Calu3 (cell line): ENCODE measurements at regions of chr2 and their contacts with region 1.

Region 1: DNA sequence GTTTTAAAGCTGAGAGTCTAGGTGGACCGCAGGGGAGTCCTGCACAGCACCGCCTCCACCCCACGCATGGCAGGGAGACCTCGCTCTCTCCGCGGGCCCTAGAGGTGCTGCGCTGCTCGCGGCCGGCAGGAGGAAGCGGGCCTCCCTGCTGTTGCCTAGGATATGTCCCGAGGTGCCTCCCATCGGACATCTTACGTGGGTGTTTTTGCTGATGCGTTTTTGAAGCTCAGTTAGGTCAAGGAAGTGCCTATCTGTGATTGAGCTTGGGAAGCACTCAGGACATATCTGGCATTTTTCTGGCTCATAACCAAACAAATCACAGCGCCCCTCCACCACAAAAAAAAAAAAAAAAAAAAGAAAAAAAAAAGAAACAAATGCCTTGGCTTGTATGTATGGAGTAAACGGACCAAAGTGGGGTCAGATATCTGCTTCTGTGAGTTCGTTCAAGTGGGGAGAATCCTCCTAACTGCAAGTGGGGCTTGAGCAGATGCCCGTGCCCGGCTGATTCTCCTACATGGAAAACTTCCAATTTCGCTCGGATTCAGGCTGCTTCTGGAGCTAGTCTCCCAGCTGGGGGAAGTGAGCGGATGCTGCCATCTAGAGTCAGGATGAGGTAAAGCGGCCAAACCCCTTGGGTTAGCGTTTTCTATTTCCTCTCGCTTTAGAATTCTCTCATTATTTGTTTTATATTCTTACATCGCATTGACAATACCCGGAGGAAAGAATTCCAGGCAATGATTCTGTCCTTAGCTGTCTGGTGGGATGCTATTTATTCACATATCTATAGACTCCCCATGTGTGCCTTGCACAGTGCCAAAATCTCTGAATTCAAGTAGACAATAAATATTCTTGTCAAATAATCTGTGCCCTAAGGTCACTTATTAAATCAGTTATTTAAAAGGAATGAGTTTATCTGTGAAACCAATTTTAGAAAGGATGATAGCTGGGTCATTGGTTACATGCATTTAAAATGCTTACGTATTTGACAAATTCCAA is 95.3 kb downstream of the CD8B2 start:
- DNase-seq: peak; percentile 74
- H3K4me3 Mint-ChIP-seq: peak overlapping the region; percentile 43
- H3K27ac Mint-ChIP-seq: no peak overlapping the region
- H3K4me1 Mint-ChIP-seq: peaks cover 9% of the 10 kb centered on the region
- H3K27me3 Mint-ChIP-seq: peaks cover 48% of the 10 kb centered on the region
- CTCF ChIP-seq: peak; percentile 67

Region 2: DNA sequence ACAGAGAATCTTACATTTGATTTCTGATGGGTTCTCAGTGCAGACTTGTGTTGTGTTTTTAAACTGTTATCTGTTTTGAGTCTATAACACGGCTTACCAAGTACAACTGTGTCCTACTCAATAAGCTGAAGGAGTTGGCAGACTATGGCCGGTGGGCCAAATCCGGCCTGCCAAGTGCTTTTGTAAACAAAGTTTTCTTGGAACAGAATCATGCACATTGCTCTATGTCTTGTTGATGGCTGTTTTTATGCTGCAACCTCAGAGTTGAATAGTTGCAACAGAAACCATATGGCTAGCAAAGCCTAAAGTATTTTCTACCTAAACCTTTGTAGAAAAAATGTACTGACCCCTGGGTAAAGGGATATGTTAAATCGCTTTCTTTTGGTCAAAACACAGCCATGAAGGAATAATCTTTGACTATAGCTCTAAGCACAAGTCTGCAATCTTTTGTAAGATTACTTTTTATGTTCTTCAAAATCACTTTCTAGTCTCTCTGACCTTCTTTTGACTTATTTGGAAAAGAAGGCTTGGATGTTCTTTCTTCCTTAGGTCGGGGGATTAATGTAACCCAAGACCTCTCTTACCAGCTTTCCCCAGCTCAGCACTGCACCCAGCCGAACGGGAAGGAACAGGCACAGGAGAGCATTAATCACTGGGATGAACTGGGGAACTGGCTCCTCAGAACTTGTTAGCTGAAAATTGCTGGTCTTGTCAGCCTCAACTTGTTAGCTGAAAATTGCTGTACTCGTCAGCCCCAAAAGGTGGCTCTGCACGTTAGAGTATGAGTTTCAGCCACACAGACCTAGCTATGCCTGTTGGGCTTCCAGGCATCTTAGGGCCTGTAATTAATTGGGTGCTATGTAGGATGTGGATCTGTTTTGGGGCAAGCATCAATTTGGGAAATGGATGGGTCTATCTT is 19.9 kb before region 1 on chr2:
- CTCF ChIA-PET with region 1: interaction called, 26 read pairs
- intact Hi-C with region 1: loop called (anchors 2 kb)
- DNase-seq: no peak
- H3K4me3 Mint-ChIP-seq: no peak overlapping the region
- H3K27ac Mint-ChIP-seq: no peak overlapping the region
- H3K4me1 Mint-ChIP-seq: peaks cover 16% of the 10 kb centered on the region
- H3K27me3 Mint-ChIP-seq: peaks cover 34% of the 10 kb centered on the region
- CTCF ChIP-seq: no peak

Region 3: GRCh38 chr2:106701203-106702022 is 119.0 kb after region 1 on chr2:
- CTCF ChIA-PET with region 1: no interaction called
- intact Hi-C with region 1: no loop called
- DNase-seq: no peak
- H3K4me3 Mint-ChIP-seq: no peak overlapping the region
- H3K27ac Mint-ChIP-seq: no peak overlapping the region
- H3K4me1 Mint-ChIP-seq: no peaks in the 10 kb centered on the region
- H3K27me3 Mint-ChIP-seq: no peaks in the 10 kb centered on the region
- CTCF ChIP-seq: no peak

Region 4: DNA sequence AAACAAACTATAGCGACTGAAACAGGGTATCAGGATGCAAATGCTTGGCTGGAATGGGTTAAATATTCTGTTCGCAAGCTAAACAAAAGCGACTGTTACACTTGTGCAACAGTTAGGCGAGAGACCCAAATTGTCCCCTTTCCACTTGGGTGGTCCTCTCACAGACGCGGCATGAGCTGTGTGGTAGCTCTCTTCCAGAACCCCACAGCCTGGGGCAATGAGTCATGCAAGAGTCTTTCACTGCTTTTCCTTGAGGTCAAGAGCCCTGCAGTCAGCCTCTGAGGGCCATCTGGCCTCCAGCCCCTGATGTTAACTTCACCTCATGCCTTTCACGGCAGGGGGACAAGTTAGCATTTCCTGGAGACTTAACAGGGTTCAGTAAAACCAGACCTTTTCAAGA is 1821.0 kb after region 1 on chr2:
- CTCF ChIA-PET with region 1: interaction called, 11 read pairs
- intact Hi-C with region 1: no loop called
- DNase-seq: no peak
- H3K4me3 Mint-ChIP-seq: no peak overlapping the region
- H3K27ac Mint-ChIP-seq: no peak overlapping the region
- H3K4me1 Mint-ChIP-seq: no peaks in the 10 kb centered on the region
- H3K27me3 Mint-ChIP-seq: no peaks in the 10 kb centered on the region
- CTCF ChIP-seq: no peak